Activated naive CD4-positive, alpha-beta T cell treated with anti-CD3 and anti-CD28 coated beads for 36 hours (primary cell): ENCODE measurements at regions of chr3 and their contacts with region 1.

Region 1: DNA sequence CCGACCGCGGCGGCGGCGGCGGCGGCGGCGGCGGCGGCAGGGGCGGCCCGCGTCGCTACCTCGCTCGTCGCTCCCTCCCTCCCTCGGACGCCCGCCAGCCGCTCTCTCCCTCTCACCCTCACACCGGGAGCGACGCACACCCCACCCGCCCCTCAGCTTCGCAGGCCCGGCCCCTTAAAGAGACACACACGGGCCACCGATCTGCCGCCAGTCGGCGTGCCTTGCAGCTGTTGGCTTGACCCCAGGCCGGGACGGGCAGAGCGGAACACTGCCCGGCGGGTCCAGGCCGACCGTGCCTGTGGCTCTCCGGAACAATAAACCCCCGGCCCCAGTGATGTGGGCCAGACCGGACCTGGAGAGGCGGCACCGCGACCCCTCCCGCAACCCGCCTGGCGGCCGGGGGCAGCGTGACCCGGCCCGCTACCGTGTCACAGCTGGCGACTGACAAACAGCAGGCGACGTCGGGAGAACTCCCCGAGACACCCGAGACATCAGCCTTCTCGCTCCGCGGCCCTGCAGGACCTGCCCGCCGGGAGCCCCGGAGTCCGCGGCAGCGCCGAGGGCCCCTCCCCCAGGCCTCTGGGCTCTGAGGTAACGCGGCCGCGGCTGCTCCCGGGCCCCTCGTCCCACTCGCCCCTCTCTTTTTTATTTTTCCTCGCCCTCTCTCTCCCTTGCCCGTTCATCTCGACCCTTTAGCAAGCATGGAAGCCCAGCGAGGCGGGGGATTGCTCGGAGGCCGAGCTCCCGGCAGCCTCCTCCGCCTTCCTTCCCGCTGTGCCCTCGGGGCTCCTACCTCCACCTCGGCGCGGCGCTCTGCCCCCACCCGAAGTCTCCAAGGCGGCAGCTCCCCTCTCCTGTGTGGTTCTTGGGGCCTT is at the start of gene SETD2:
- DNase-seq: peak; percentile 87
- H3K4me3 Mint-ChIP-seq: peak within 1 kb of the TSS; percentile 96
- H3K27ac Mint-ChIP-seq: peak within 1 kb of the TSS; percentile 98
- H3K4me1 Mint-ChIP-seq: peaks cover 43% of the 10 kb centered on the region
- H3K27me3 Mint-ChIP-seq: no peaks in the 10 kb centered on the region
- total RNA-seq, gene SETD2: 27.7 to 28.1 TPM

Region 2: GRCh38 chr3:47016934-47017435 is 147.3 kb before region 1 on chr3:
- CTCF ChIA-PET with region 1: interaction called, 3 read pairs
- intact Hi-C with region 1: loop called (anchors 1 kb)
- DNase-seq: peak; percentile 61
- H3K4me3 Mint-ChIP-seq: peak overlapping the region; percentile 2
- H3K27ac Mint-ChIP-seq: peak overlapping the region; percentile 70
- H3K4me1 Mint-ChIP-seq: peaks cover 40% of the 10 kb centered on the region
- H3K27me3 Mint-ChIP-seq: no peaks in the 10 kb centered on the region

Region 3: DNA sequence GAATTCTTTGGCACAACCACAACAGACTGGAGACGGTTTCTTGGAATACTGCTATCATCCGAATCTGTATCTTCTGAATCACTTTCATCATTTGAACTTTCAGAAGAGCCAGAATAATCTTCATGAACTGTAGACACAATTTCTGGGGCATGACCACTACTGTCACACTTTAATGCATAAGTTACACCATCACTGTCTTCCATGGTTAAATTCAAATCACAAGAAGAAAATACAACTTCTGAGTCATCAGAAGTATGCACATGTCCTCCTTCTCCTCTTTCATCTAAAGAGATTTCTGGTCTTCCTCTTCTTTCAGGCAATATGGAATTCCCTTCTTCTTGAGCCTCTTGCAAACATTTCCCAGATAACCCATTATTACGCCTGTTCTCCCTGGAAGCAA is 42.8 kb before region 1 on chr3:
- CTCF ChIA-PET with region 1: interaction called, 5 read pairs
- intact Hi-C with region 1: loop called (anchors 2 kb)
- DNase-seq: no peak
- H3K4me3 Mint-ChIP-seq: no peak overlapping the region
- H3K27ac Mint-ChIP-seq: peak overlapping the region; percentile 15
- H3K4me1 Mint-ChIP-seq: peaks cover 41% of the 10 kb centered on the region
- H3K27me3 Mint-ChIP-seq: no peaks in the 10 kb centered on the region

Region 4: GRCh38 chr3:47324278-47324865 is 160.1 kb after region 1 on chr3:
- CTCF ChIA-PET with region 1: interaction called, 19 read pairs
- intact Hi-C with region 1: loop called (anchors 1 kb)
- DNase-seq: peak; percentile 66
- H3K4me3 Mint-ChIP-seq: no peak overlapping the region
- H3K27ac Mint-ChIP-seq: no peak overlapping the region
- H3K4me1 Mint-ChIP-seq: no peaks in the 10 kb centered on the region
- H3K27me3 Mint-ChIP-seq: no peaks in the 10 kb centered on the region

Region 5: DNA sequence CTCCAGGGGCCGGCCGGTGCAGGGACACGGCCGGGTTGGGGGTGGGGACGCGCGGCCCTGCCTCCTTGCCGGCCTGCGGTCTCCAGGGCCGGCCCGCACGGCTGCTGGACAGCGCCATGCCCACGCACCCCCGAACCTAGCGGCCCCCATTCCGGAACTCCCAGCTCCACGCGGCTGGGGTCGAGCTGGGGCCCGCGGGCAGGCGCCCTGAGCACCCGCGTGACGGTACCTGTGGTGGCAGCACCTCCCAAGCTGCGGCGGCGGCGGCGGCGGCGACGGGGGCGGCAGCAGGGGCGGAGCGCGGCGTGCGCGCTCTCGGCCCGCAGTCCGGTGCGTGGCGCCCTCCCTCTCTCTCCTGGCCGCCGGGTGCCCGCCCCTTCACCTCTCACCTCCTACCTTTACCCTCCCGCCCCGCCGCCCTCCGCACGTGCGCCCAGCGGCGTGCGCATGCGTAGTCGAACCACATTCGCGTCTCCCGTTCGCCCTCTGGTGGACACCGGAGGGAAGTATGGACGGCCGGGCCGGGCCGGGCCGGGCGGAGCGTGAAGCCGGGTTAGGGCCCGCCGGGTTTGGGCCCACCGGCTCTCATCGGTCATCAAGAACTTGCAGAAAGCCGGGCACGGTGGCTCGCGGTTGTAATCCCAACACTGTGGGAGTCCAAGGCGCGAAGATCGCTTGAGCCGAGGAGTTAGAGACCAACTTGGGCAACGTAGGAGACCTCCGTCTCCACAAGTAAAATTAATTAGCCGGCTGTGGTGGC is 311.5 kb after region 1 on chr3 and contains the start of gene SCAP:
- CTCF ChIA-PET with region 1: no interaction called
- intact Hi-C with region 1: loop called (anchors 1 kb)
- DNase-seq: peak; percentile 96
- H3K4me3 Mint-ChIP-seq: peak within 1 kb of the TSS; percentile 86
- H3K27ac Mint-ChIP-seq: peak within 1 kb of the TSS; percentile 83
- H3K4me1 Mint-ChIP-seq: peaks cover 35% of the 10 kb centered on the region
- H3K27me3 Mint-ChIP-seq: no peaks in the 10 kb centered on the region
- total RNA-seq, gene SCAP: 31.6 to 34.7 TPM